Dendritic cell treated with granulocyte-macrophage colony-stimulating factor and Interleukin-4, amounts not matched to agents 40 ng/mL and 50 ng/mL, for 4 days (primary cell): ENCODE measurements at regions of chr2 and their contacts with region 1.

Region 1: DNA sequence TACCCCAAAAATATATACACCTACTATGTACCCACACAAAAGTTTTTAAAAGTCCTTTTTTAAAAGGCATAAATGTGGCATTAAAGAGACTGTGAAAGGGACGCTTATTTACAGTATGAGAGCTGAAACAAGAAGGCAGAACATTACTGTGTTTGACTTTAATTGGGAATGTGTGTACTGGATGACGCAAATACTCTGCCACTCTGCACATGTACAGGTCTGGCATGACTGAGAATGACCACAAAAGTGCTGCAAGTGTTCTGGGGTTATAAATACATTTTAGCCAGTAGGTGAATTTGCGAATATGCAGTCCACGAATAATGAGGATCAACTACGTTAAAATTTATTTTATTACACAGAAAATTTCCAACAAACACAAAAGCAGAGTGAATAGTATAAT is 11.4 kb downstream of the DARS1 start:
- H3K4me3 Mint-ChIP-seq: no peak overlapping the region
- H3K27ac Mint-ChIP-seq: no peak overlapping the region
- H3K4me1 Mint-ChIP-seq: peaks cover 24% of the 10 kb centered on the region
- H3K27me3 Mint-ChIP-seq: no peaks in the 10 kb centered on the region

Region 2: GRCh38 chr2:135876066-135876711 is 97.8 kb before region 1 on chr2 and contains the start of gene MCM6:
- intact Hi-C with region 1: no loop called
- H3K4me3 Mint-ChIP-seq: peak within 1 kb of the TSS; percentile 83
- H3K27ac Mint-ChIP-seq: peak within 1 kb of the TSS; percentile 82
- H3K4me1 Mint-ChIP-seq: peaks cover 22% of the 10 kb centered on the region
- H3K27me3 Mint-ChIP-seq: no peaks in the 10 kb centered on the region

Region 3: DNA sequence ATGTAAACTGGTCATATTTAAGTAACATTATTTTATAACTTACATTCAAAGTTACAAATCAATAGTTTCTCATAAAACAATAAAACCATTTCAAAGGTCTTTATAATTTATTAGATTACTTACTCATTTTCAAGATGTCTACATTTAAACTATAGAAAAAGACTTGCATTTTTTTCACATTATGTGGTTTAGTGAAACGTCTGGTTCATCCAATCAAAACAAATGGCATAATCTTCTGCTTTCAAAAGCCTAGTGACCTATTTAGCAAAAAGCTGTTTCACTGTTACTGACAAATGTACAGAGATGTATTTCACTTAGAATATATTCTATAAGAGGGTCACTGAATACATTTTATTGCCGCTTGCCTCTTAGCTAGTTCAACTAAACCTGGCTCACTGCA is 48.5 kb before region 1 on chr2:
- intact Hi-C with region 1: loop called (anchors 10 kb)
- H3K4me3 Mint-ChIP-seq: no peak overlapping the region
- H3K27ac Mint-ChIP-seq: no peak overlapping the region
- H3K4me1 Mint-ChIP-seq: no peaks in the 10 kb centered on the region
- H3K27me3 Mint-ChIP-seq: no peaks in the 10 kb centered on the region

Region 4: DNA sequence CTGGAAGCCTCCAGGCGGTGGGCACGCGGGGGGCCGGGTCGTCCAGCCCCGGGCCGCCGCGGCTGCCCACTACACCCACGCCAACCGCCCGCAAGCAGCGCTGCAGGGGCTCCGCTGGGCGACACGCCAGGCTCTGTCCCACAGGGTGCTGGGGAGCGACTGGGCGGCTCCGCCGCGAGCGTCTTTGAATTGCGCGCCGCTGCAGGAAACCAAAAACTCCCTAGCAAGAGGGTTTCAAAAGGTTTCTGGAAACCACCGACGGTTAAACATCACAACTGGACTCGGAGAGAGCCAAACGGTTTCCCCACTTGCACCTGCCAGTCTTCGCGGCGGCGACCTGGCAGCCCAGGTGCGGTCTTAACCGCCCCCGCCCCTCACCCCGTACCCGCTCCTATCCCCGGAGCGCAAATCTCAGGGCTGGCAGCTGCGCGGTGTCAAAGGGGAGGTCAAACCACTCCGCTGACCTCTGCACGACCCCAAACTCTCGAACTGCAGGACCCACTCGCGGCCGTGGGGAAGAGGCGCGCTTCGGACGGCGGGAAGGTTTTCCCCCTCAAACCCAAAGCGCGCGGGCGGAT is 142.9 kb after region 1 on chr2:
- intact Hi-C with region 1: no loop called
- H3K4me3 Mint-ChIP-seq: peak overlapping the region; percentile 95
- H3K27ac Mint-ChIP-seq: peak overlapping the region; percentile 90
- H3K4me1 Mint-ChIP-seq: peaks cover 52% of the 10 kb centered on the region
- H3K27me3 Mint-ChIP-seq: no peaks in the 10 kb centered on the region